Activated CD4-positive, alpha-beta T cell treated with anti-CD3 and anti-CD28 coated beads for 36 hours (primary cell): ENCODE measurements at regions of chr17 and their contacts with region 1.

Region 1: DNA sequence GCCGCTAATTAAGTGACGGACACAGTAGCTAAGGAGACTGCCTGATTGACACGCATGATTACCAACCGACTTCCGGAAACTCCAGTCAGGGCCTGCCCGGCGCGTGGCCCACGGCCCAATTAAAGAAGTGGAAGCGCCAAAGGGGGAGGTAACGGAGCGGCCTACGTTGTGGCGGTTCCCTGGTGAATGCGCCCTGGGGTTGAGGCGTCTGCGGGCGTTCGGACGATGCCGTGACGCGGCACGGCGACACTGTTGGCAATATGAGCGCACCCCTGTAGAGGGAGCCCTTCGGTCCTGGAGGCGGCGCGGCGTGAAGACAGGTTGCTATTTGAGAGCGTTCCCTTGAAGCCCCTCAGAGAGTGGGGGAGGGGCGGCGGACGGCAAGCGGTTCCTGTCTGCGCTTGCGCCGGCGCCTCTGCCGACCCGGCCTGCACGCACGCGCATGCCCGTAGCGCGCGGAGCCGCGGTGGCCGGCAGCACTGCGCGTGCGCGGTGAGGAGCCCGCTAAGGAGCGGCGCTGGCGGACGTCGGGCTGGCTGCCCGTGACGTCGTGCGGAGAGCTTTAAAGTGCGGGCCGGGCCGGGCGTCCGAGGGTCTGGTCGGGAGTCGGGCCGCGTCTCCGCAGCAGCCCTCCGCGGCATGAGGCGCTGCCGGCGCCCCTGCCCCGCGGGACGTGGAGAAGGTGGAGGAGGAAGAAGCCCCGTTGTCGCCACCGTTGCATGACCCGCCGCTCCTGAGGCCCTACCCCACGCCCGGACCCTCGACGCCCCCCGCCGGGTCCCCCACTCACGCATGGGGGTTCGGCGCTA is at the start of gene ALKBH5:
- DNase-seq: peak; percentile 98
- ATAC-seq: peak; percentile 84
- H3K4me3 Mint-ChIP-seq: peak within 1 kb of the TSS; percentile 97
- H3K27ac Mint-ChIP-seq: peak within 1 kb of the TSS; percentile 94
- H3K4me1 Mint-ChIP-seq: peaks cover 45% of the 10 kb centered on the region
- H3K27me3 Mint-ChIP-seq: no peaks in the 10 kb centered on the region
- total RNA-seq, gene ALKBH5: 163 to 168 TPM

Region 2: DNA sequence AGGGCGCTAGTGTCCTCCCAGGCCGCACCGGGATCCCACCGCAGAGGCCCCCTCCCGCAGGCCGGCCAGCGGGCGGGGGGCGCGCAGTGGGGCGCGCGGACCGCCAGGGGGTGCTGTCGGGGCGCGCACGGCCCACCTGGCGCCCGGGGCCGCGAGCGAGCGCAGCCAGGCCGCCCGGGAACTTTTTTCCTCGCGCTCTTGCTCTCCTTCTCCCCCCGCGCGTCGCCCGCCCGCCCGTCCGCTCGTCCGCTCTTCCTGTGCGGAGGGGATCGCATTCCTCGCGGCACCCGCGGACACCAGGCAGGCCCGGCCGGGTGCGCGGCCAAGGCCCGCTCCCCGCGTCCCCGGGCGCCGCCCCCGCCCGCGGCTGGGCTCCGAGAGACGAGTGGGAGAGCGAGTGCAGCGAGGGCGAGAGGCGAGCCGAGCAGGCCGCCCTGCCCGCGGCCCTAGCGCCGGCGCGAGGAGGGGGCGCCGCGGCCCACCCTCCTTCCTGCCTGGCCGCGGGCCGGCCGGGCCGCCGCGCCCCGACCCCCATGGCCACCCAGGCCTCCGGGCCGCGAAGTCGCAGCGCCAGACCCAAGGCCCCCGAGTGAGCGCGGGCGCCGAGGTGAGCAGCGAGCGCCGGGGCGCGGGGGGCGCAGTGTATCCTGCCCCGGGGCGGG is 502.2 kb before region 1 on chr17 and contains the start of gene RAI1:
- CTCF ChIA-PET with region 1: no interaction called
- POLR2A ChIA-PET with region 1: no interaction called
- intact Hi-C with region 1: loop called in 1 of 2 experiments (anchors 2 kb)
- DNase-seq: peak; percentile 84
- ATAC-seq: peak; percentile 63
- H3K4me3 Mint-ChIP-seq: peak within 1 kb of the TSS; percentile 86
- H3K27ac Mint-ChIP-seq: peak within 1 kb of the TSS; percentile 86
- H3K4me1 Mint-ChIP-seq: peaks cover 27% of the 10 kb centered on the region
- H3K27me3 Mint-ChIP-seq: no peaks in the 10 kb centered on the region
- total RNA-seq, gene RAI1: 13.6 to 16.4 TPM

Region 3: DNA sequence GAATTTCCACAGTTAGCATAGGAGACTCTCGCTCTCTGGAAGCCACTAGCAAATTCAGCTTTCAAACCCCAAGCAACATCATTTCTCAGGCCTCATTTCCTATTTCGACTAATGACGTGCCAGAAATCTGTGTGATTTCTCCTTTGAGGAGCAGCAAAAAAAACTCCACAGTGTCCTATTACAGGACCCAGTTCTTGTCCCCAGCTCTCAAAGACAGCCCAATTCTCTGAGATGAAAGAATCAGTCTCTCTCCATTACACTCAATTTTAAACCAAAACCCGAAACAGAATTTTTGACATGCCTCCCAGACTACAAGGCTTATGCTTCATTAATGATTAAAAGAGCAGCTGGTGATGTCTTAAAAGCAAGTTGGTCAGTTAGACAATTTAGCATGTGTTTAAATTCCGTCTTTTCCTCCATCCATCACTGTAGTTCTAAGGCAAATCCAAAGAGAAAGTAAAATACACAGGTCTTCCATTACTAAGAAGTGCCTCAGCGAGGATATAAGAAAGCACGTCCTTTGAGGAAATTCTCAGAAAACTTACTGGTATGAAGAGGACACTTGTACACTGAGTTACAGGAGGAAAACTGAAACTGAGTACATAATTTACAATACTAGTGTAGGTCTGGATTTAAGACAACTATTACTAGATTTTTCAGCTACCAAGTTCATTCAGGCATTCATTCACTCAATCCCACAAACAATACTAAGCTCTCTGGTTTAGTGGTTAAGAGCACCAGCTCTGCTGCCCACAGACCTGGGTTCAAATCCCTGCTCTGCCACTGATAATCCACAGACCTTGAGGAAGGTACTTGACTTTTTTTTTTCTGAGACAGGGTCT is 223.8 kb before region 1 on chr17:
- CTCF ChIA-PET with region 1: interaction called, 3 read pairs
- POLR2A ChIA-PET with region 1: no interaction called
- intact Hi-C with region 1: loop called in 1 of 2 experiments (anchors 2 kb)
- DNase-seq: peak; percentile 67
- ATAC-seq: peak; percentile 61
- H3K4me3 Mint-ChIP-seq: peak overlapping the region; percentile 71
- H3K27ac Mint-ChIP-seq: peak overlapping the region; percentile 95
- H3K4me1 Mint-ChIP-seq: peaks cover 69% of the 10 kb centered on the region
- H3K27me3 Mint-ChIP-seq: no peaks in the 10 kb centered on the region

Region 4: GRCh38 chr17:18141210-18141803 is 42.2 kb before region 1 on chr17:
- CTCF ChIA-PET with region 1: interaction called, 6 read pairs
- POLR2A ChIA-PET with region 1: no interaction called
- intact Hi-C with region 1: loop called (anchors 1 to 2 kb)
- DNase-seq: peak; percentile 52
- ATAC-seq: peak; percentile 68
- H3K4me3 Mint-ChIP-seq: no peak overlapping the region
- H3K27ac Mint-ChIP-seq: no peak overlapping the region
- H3K4me1 Mint-ChIP-seq: no peaks in the 10 kb centered on the region
- H3K27me3 Mint-ChIP-seq: no peaks in the 10 kb centered on the region

Region 5: GRCh38 chr17:18225121-18225566 is 41.6 kb after region 1 on chr17:
- CTCF ChIA-PET with region 1: no interaction called
- POLR2A ChIA-PET with region 1: no interaction called
- intact Hi-C with region 1: loop called (anchors 1 to 5 kb)
- DNase-seq: peak; percentile 99
- ATAC-seq: peak; percentile 98
- H3K4me3 Mint-ChIP-seq: peak overlapping the region; percentile 56
- H3K27ac Mint-ChIP-seq: peak overlapping the region; percentile 55
- H3K4me1 Mint-ChIP-seq: peaks cover 18% of the 10 kb centered on the region
- H3K27me3 Mint-ChIP-seq: no peaks in the 10 kb centered on the region

Region 6: DNA sequence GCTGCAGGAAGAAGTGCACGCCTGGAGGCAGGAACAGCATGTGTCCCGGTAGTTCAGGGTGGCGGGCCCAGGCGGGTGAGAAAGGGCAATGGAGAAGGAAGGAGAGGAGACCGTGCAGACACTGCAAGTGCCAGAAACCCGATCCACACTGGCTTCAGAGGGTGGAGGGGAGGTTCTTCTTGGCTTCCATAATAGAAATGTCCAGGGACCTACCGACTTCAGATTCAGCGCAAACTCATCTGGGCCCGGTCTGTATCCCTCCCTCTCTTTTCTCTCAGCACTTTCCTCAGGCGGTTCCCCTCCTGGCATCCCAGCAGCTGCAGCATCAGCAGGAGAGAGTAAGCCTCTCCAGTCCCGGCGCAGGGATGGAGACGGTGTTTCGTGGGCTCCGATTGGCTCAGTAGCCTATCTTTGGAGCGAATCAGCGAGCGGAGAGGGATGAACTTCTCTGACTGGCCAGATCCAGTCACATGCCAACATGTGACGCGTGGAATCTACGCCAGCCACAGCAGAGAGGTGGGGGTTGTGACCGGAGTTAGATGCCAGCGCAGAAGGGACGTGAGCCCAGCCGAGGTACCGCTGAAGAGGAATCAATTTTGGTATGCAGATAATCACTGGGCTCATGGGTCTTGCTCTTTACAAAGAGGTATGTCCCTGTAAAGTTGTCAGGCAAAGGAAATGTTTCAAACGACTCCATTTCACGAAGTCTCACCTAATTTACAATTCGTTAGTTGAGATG is 672.5 kb after region 1 on chr17:
- CTCF ChIA-PET with region 1: no interaction called
- POLR2A ChIA-PET with region 1: no interaction called
- intact Hi-C with region 1: loop called in 1 of 2 experiments (anchors 2 kb)
- DNase-seq: peak; percentile 94
- ATAC-seq: peak; percentile 85
- H3K4me3 Mint-ChIP-seq: peak overlapping the region; percentile 92
- H3K27ac Mint-ChIP-seq: peak overlapping the region; percentile 90
- H3K4me1 Mint-ChIP-seq: peaks cover 45% of the 10 kb centered on the region
- H3K27me3 Mint-ChIP-seq: no peaks in the 10 kb centered on the region

Region 7: DNA sequence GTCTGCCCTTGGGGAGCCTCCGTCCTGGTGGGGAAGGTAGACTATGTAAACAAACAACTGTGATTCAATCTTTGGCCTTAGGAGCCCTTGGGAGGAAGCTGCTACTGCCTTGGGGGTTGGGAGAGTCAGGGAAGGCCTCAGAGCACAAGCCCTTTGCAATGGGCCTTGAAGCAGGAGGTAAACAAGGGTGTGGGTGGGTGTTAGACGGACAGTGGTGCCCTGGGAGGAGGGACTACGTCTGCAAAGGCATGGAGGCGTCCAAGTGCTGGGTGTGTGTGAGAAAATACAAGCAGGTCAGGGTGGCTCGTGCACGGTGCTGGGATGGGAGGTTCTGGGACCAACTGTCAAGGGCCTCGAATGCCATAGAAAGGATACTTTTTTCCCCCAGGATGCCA is 827.6 kb after region 1 on chr17:
- CTCF ChIA-PET with region 1: no interaction called
- POLR2A ChIA-PET with region 1: no interaction called
- intact Hi-C with region 1: no loop called
- DNase-seq: no peak
- ATAC-seq: no peak
- H3K4me3 Mint-ChIP-seq: no peak overlapping the region
- H3K27ac Mint-ChIP-seq: no peak overlapping the region
- H3K4me1 Mint-ChIP-seq: no peaks in the 10 kb centered on the region
- H3K27me3 Mint-ChIP-seq: no peaks in the 10 kb centered on the region